GM18951 (cell line): ENCODE measurements at regions of chr6 and their contacts with region 1.

Region 1: DNA sequence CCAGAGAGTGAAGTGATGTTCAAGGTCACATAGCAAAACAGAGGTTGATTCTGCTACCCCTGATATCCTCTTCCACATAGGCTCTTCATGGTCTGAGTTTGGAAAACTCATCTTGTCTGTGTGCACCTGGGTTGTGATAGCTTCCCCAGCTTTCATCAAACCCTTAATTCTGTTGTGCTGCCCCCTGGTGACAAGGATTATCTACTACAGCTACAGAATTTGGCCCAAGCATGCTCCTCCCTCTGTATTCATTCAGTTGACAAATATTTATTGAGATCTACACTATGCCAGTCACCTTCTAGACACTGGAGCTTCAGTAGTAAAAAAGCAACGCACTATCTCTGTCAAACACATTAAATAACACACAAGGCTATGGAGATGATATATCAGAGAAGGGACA is 50.4 kb downstream of the SMPDL3A start:
- POLR2A ChIP-seq: no peak

Region 2: DNA sequence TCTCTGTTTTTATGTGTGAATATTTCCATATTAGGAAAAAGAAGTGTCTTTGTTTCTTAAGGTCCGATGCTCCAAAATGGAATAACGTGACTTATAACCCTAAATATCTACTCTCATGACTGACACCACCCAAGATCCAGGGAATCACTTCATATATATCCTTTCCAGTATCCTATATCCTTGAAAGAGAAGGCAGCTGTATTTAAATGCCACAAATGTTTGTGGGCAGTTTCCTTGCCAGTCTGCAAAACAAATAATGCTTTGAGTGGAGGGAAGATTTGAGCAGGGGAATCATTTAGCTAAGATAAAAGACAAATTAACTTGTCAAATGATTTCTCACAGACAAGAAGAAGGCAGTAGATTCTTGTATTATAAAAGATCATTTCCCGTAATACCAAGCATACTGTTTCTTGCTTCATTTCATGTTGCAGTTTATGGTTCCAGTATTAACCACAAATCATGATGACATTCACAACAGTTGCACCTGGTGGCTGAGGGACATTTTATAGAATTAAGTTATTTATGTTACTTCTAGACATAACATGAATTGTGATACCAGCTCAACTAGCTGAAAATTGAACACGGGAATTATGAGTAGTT is 89.9 kb before region 1 on chr6:
- in situ Hi-C with region 1: loop called (anchors 10 kb)
- POLR2A ChIP-seq: no peak